GM12878 (cell line): ENCODE measurements at regions of chr6 and their contacts with region 1.

Region 1: DNA sequence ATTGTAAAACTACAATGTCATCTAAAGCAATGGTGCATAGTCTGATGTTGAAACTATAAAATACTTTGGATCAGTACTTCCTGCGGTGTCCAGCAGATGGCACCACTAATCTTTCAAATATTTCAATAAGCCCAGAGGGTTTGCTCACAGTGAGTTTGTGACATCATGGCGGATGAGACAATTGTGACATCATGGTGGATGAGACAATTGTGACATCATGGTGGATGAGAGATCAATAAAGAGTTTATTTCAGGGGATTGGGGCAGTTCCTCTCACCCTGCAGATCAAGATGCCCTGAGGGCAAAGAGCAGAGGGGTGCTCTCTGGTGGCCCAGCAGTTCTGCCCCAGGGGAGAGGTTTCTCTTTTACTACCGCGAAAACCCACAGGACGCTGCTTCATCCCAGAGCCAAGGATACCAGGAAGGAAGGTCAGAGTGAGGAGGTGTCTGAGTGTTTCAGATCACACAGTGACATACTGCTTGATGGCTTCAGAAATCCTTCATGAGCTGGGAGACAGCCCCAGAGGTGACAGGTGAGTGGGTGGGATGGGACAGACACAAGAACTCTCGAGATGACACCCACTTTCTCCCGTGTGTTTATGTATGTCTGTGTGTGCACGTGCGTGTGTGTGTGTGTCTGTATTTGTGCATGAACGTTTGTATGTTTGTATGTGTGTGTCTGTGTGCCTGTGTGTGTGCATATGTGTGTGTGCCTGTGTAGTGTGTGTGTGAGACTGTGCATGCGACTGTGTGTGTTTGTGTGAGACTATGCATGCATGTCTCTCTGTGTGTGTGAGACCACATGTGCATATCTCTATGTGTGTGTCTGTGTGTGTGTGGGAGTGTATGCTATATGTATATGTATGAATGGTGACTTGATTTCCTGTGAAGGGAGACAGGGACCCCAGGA is 7.3 kb upstream of the ULBP2 start:
- DNase-seq: peak; percentile 34
- ATAC-seq: peak; percentile 34
- H3K4me3 ChIP-seq: no peak overlapping the region
- H3K27ac ChIP-seq: no peak overlapping the region
- H3K4me1 ChIP-seq: peaks cover 14% of the 10 kb centered on the region
- H3K27me3 ChIP-seq: peaks cover 4 to 8% of the 10 kb centered on the region in 2 experiments
- CTCF ChIP-seq: peak; percentile 61 to 78 (median 77)
- EP300 ChIP-seq: no peak
- POLR2A ChIP-seq: no peak
- RAD21 ChIP-seq: peak; percentile 86

Region 2: DNA sequence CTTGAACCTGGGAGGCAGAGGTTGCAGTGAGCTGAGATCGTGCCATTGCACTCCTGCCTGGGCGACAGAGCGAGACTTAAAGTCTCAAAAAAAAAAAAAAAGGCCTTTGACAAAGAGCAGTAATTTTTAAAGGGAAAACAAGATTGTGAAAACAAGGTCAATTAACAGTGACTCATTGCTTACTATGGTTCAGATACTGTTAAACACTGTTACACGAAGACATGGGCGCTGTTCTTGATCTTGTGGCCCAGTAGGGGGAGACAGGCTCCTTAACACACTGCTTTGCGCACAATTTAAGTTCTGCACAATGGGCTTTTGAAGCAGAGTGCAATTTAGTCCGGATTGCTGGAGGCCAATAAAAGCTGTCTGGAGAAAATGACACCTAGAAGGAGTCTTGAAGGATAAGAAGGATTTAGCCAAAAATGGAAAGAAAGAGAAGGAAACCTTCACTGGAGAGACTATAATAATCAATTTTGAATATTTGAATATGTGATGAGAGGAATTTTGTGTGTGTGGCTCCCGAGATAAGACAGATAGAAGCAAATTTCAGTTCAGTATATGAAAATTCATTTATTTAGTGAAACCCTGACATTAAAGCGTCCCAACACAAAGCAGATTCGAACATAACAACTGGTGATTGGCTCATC is 210.6 kb before region 1 on chr6:
- CTCF ChIA-PET with region 1: no interaction called
- POLR2A ChIA-PET with region 1: no interaction called
- RAD21 ChIA-PET with region 1: no interaction called
- SMC1A ChIA-PET with region 1: no interaction called
- in situ Hi-C with region 1: no loop called
- intact Hi-C with region 1: loop called (anchors 10 kb)
- DNase-seq: no peak
- ATAC-seq: peak; percentile 91
- H3K4me3 ChIP-seq: no peak overlapping the region
- H3K27ac ChIP-seq: no peak overlapping the region
- H3K4me1 ChIP-seq: no peaks in the 10 kb centered on the region
- H3K27me3 ChIP-seq: no peaks in the 10 kb centered on the region
- CTCF ChIP-seq: peak; percentile 73 to 76 (median 73)
- EP300 ChIP-seq: no peak
- POLR2A ChIP-seq: no peak
- RAD21 ChIP-seq: peak; percentile 68

Region 3: DNA sequence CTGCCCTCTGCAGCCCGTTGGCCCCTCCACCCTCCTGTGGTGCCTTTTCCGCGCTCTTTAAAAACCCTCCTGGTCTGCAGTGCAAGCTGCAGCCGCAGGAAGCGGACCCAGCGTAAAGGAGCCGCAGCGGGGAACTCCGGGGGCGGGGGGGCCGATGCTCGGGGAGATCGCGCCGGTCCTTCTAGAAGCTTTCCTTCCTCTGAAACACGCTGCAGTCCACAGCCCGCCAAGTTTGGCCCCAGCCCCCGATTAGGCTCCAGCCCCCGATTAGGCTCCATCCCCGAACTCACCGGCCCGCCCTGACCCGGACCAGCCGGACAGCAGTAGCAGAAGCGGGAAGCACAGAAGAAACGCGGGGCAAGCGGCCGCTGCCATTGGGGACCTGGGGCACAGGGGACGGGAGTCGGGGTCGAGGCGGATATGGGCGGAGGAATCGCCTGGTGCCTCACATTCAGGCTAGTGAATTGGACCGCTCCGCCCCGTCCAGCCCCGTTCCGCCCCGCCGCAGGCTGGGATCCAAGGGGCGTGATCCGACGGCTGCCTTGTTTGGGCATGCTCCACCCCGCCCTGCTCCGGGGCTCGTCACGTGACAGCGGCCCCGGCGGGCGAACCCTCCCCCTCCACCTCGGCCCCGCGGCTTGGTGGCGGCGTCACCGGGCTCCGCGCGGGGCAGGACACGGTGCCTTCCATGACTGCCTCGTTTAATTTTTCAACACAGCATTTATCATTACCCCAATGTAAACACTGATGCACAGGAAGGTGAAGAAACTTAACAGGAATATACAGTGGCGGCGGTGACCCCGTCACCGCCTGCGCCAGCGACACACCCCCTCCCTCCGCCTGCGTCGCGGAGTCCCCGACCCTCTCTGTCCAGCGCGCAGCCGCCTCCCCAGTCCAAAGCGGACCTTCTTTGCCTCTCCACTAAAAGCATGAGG is 70.5 kb after region 1 on chr6:
- CTCF ChIA-PET with region 1: interaction called, 6 read pairs
- POLR2A ChIA-PET with region 1: no interaction called
- RAD21 ChIA-PET with region 1: no interaction called
- SMC1A ChIA-PET with region 1: interaction called, 3 read pairs
- in situ Hi-C with region 1: loop called (anchors 5 kb)
- intact Hi-C with region 1: no loop called
- DNase-seq: no peak
- ATAC-seq: peak; percentile 84
- H3K4me3 ChIP-seq: peak overlapping the region; percentile 73
- H3K27ac ChIP-seq: no peak overlapping the region
- H3K4me1 ChIP-seq: peaks cover 35% of the 10 kb centered on the region
- H3K27me3 ChIP-seq: no peaks in the 10 kb centered on the region; a peak in 2 of 4 replicates
- CTCF ChIP-seq: 0 out of 6 replicates have a peak, but pooled peaks of 1 of the 3 experiments have one; percentile 18
- EP300 ChIP-seq: peak in 1 of 2 experiments; percentile 8; a peak in 1 of 4 replicates
- POLR2A ChIP-seq: peak; percentile 72
- RAD21 ChIP-seq: 0 out of 2 replicates have a peak, but pooled peaks have one; percentile 2

Region 4: GRCh38 chr6:150016324-150017185 is 82.1 kb after region 1 on chr6:
- CTCF ChIA-PET with region 1: interaction called, 18 read pairs
- POLR2A ChIA-PET with region 1: no interaction called
- RAD21 ChIA-PET with region 1: interaction called, 15 read pairs
- SMC1A ChIA-PET with region 1: interaction called, 9 read pairs
- in situ Hi-C with region 1: no loop called
- intact Hi-C with region 1: loop called (anchors 1 kb)
- DNase-seq: no peak
- ATAC-seq: peak; percentile 89
- H3K4me3 ChIP-seq: no peak overlapping the region
- H3K27ac ChIP-seq: no peak overlapping the region
- H3K4me1 ChIP-seq: no peaks in the 10 kb centered on the region
- H3K27me3 ChIP-seq: peaks cover 0 to 3% of the 10 kb centered on the region in 2 experiments; a peak in 3 of 4 replicates
- CTCF ChIP-seq: peak; percentile 51 to 58 (median 55); a peak in 5 of 6 replicates
- EP300 ChIP-seq: no peak
- POLR2A ChIP-seq: no peak
- RAD21 ChIP-seq: peak; percentile 79

Region 5: DNA sequence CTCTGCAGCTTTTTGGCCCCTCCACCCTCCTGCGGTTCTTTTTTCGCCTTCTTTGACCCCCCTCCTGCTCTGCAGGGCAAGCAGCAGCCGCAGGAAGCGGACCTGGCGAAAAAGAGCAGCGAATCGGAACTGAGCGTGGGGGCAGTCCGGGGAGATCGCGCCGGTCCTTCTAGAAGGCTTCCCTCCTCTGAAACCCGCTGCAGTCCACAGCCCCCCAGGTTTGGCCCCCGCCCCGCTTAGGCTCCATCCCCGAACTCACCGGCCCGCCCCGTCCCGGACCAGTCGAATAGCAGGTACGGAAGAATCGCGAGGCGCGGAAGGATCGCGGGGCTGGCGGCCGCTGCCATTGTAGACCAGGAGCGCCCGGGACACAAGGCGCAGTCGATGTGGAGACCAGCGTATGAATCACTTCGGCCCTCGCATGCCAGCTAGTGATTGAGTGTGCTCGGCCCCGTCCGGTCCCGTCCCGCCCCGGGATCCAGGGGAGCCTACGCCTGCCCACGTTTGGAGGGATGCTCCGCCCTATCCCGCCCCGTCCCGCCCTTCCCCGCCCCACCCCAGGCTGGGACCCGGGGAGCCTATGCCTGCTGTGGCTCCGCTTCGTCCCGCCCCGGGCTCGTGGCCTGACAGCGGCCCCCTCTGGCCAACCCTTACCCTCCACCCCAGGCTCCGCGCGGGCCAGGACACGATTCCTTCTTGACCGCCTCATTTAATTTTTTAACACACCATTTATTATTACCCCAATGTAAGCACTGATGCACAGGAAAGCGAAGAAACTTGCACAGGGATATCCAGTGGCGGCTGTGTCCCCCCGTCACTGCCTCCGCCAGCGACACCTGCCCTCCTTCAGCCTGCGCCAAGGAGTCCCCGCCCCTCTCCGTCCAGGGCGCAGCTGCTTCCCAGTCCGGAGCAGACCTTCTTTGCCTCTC is 134.5 kb after region 1 on chr6 and contains the start of gene ULBP3:
- CTCF ChIA-PET with region 1: no interaction called
- POLR2A ChIA-PET with region 1: no interaction called
- RAD21 ChIA-PET with region 1: no interaction called
- SMC1A ChIA-PET with region 1: no interaction called
- in situ Hi-C with region 1: no loop called
- intact Hi-C with region 1: loop called (anchors 5 kb)
- DNase-seq: no peak
- ATAC-seq: peak; percentile 93
- H3K4me3 ChIP-seq: peak within 1 kb of the TSS; percentile 57
- H3K27ac ChIP-seq: no peak within 1 kb of the TSS
- H3K4me1 ChIP-seq: no peaks in the 10 kb centered on the region
- H3K27me3 ChIP-seq: peaks cover 0 to 2% of the 10 kb centered on the region in 2 experiments; a peak in 1 of 4 replicates
- CTCF ChIP-seq: peak; percentile 13 to 52 (median 44); a peak in 3 of 6 replicates
- EP300 ChIP-seq: no peak
- POLR2A ChIP-seq: peak; percentile 38; the same call in 1 of the 2 replicates
- RAD21 ChIP-seq: no peak
- polyA plus RNA-seq, gene ULBP3: not detected

Region 6: DNA sequence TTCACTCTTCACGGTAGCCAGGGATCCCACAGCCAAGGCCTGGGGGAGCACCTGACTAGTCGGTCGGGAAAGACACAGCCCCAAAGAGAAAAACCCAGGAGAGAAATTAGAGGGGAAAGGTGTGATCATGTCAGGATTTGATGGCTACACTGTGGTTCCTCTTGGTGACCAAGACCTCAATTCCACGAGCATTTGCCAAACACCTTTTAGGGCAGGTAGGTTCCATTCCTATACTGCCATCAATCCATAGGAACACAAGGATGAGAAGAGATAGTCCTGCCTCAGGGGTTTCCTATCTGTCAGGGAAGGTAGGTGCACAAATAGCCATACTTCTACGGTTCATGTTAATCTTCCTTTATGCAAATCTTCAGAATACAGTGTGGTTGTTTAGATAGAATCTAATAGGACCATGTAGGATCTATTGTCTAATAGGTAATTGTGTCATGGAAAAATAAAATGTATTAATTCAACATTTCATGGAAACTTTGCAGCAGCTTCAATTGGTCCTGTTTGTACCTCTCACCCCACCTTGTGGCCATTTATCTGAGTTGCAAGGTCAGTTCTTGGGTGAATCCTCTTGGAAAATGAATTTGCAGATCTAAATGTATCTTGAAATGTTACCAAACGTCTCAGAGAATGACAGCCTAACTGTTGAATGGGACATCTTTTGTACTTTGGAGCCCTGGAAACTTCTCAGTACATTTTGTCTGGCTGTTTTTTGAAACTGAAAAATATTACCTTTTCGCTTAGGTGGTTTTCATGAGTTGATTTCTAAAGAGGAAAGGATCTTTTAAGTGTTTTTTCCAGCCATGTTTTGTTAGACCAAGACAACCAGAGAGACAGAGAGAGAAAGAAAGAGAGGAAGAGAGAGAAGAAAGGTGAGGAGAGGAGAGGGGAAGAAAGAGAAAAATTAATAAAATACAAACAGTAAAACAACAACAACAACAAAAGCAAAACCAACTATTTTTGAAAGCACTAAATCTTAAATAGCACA is 400.6 kb after region 1 on chr6:
- CTCF ChIA-PET with region 1: no interaction called
- POLR2A ChIA-PET with region 1: no interaction called
- RAD21 ChIA-PET with region 1: no interaction called
- SMC1A ChIA-PET with region 1: no interaction called
- in situ Hi-C with region 1: no loop called
- intact Hi-C with region 1: loop called (anchors 10 kb)
- DNase-seq: no peak
- ATAC-seq: peak; percentile 43; the same call in 2 of the 3 replicates
- H3K4me3 ChIP-seq: no peak overlapping the region
- H3K27ac ChIP-seq: no peak overlapping the region
- H3K4me1 ChIP-seq: no peaks in the 10 kb centered on the region
- H3K27me3 ChIP-seq: no peaks in the 10 kb centered on the region
- CTCF ChIP-seq: peak; percentile 59 to 70 (median 68); a peak in 5 of 6 replicates
- EP300 ChIP-seq: no peak
- POLR2A ChIP-seq: no peak
- RAD21 ChIP-seq: peak; percentile 87

Region 7: DNA sequence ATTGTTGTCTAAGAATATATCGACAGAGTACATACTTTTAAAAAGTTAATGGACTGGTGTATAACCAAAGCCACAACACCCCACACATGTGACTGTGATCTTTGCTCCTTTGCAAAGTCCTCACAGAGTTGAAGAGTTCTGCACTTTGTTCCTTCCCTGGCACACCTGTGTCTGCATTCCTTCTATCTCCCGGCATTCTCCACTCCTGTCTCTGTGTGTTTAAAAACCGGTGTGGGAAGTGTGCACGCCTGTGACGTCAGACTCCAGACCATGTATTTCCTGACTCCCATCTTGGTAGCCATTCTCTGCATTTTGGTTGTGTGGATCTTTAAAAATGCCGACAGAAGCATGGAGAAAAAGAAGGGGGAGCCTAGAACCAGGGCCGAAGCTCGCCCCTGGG is 434.3 kb after region 1 on chr6 and contains the start of gene IYD:
- CTCF ChIA-PET with region 1: no interaction called
- POLR2A ChIA-PET with region 1: no interaction called
- RAD21 ChIA-PET with region 1: no interaction called
- SMC1A ChIA-PET with region 1: no interaction called
- in situ Hi-C with region 1: no loop called
- intact Hi-C with region 1: no loop called
- DNase-seq: no peak
- ATAC-seq: no peak
- H3K4me3 ChIP-seq: no peak within 1 kb of the TSS
- H3K27ac ChIP-seq: no peak within 1 kb of the TSS
- H3K4me1 ChIP-seq: no peaks in the 10 kb centered on the region
- H3K27me3 ChIP-seq: peaks cover 2 to 3% of the 10 kb centered on the region in 2 experiments; a peak in 3 of 4 replicates
- CTCF ChIP-seq: no peak
- EP300 ChIP-seq: no peak
- POLR2A ChIP-seq: no peak
- RAD21 ChIP-seq: no peak
- polyA plus RNA-seq, gene IYD: not detected